Heart right ventricle (tissue), 16 donors: ENCODE measurements at regions of chr1 and their contacts with region 1.

Region 1: GRCh38 chr1:99707535-99708142 is 58.8 kb downstream of the FRRS1 start:
- DNase-seq: peak; percentile 21 to 66
- ATAC-seq: peak in 7 of 8 donors; percentile 63 to 85 (median 81)
- H3K4me3 ChIP-seq: no peak overlapping the region
- H3K27ac ChIP-seq: peak overlapping the region in 3 of 10 donors; percentile 11 to 47 (median 38)
- H3K4me1 ChIP-seq: peaks cover 0 to 22% (median 3%) of the 10 kb centered on the region in 9 donors
- H3K27me3 ChIP-seq: no peaks in the 10 kb centered on the region
- CTCF ChIP-seq: peak; percentile 78 to 95 (median 91)

Region 2: GRCh38 chr1:98794196-98794886 is 913.3 kb before region 1 on chr1:
- intact Hi-C with region 1: loop called in 2 of 10 experiments (anchors 10 kb)
- DNase-seq: peak in 1 of 2 donors; percentile 30
- ATAC-seq: peak in 7 of 8 donors; percentile 43 to 70 (median 65)
- H3K4me3 ChIP-seq: no peak overlapping the region
- H3K27ac ChIP-seq: no peak overlapping the region
- H3K4me1 ChIP-seq: no peaks in the 10 kb centered on the region
- H3K27me3 ChIP-seq: no peaks in the 10 kb centered on the region
- CTCF ChIP-seq: peak; percentile 34 to 77 (median 70)

Region 3: GRCh38 chr1:99481391-99481996 is 226.1 kb before region 1 on chr1:
- intact Hi-C with region 1: loop called in 6 of 10 experiments (anchors 5 to 10 kb)
- DNase-seq: peak in 1 of 2 donors; percentile 71
- ATAC-seq: peak in 7 of 8 donors; percentile 52 to 76 (median 67)
- H3K4me3 ChIP-seq: no peak overlapping the region
- H3K27ac ChIP-seq: no peak overlapping the region
- H3K4me1 ChIP-seq: peaks cover 0 to 4% (median 0%) of the 10 kb centered on the region in 9 donors
- H3K27me3 ChIP-seq: no peaks in the 10 kb centered on the region
- CTCF ChIP-seq: peak; percentile 56 to 91 (median 81)

Region 4: GRCh38 chr1:99526926-99527477 is 180.6 kb before region 1 on chr1:
- intact Hi-C with region 1: loop called in 1 of 10 experiments (anchors 10 kb)
- DNase-seq: no peak
- ATAC-seq: peak in 3 of 8 donors; percentile 28 to 56 (median 44)
- H3K4me3 ChIP-seq: no peak overlapping the region
- H3K27ac ChIP-seq: no peak overlapping the region
- H3K4me1 ChIP-seq: peaks cover 0 to 20% (median 9%) of the 10 kb centered on the region in 9 donors
- H3K27me3 ChIP-seq: no peaks in the 10 kb centered on the region
- CTCF ChIP-seq: peak in 7 of 9 donors; percentile 36 to 69 (median 47)

Region 5: DNA sequence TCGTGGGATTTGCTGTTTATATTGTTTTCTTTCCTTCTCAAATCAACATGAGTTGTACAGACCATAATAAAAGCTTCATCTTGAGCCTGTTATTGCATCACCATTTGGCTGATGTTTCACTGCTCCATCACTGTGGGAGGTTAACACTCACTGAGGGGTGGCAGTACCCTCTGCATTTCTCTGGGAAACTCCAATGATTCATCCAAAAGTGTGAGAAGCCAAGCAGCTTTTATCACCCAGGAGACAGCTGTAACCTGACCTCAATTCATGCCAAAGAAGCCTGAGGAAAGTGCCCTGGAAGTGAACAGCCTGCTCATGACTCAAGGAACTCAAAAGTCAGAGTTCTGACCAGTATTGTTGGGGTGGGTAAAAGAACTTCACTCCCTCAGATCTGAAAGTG is 914.4 kb after region 1 on chr1:
- intact Hi-C with region 1: no loop called
- DNase-seq: no peak
- ATAC-seq: peak in 6 of 8 donors; percentile 21 to 94 (median 54)
- H3K4me3 ChIP-seq: no peak overlapping the region
- H3K27ac ChIP-seq: no peak overlapping the region
- H3K4me1 ChIP-seq: peaks cover 0 to 27% (median 0%) of the 10 kb centered on the region in 9 donors
- H3K27me3 ChIP-seq: no peaks in the 10 kb centered on the region
- CTCF ChIP-seq: no peak